Activated T-helper 2 cell treated with anti-CD3 and anti-CD28 coated beads, Interferon-gamma antibody, Interleukin-2, Interleukin-4, amounts not matched to agents 10 μg/mL and 5 μg/mL and 100 μg/mL, durations not matched to agents 14 hours and 24 hours and 36 hours (primary cell): ENCODE measurements at regions of chr1 and their contacts with region 1.

Region 1: DNA sequence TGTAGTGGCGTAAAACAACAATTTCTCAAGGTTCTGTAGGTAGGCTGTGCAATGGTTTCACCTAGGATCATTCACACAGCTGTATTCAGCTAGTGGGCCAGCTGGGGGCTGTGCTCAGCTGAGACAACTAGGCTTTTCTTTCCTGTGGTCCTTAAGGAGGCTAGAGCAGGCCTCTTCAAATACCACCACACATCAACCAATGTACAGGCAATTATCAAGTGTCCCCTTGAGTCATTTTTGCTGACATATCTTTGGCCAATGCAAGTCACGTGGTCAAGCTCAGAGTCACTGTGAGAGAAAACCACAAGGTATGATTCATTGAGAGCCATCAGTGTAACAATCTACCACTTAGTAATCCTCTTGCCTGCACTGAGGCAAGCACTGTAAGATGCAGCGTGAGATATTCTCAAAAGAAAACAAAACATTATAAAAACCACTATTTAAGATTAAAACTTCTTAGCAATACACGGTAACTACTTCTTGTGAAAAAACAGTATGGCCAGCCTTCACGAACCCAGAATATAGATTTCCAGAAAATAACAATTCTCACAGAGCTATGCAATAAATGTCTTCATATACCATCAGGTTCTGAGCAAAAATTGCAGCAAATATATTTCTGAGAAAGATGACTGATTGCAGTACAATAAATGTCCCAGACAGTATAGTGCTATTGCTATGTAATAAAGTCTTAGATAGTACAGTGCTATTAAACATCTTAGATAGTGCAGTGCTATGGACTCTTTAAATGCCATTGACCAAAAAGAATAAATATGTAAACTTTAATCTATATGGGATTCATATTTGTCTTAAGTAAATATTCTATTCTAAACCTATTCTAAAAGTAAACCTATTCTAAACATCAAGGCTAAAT is 55.3 kb downstream of the NME7 start:
- DNase-seq: peak; percentile 69
- H3K4me3 Mint-ChIP-seq: no peak overlapping the region
- H3K27ac Mint-ChIP-seq: peak overlapping the region; percentile 70
- H3K4me1 Mint-ChIP-seq: peaks cover 31% of the 10 kb centered on the region
- H3K27me3 Mint-ChIP-seq: no peaks in the 10 kb centered on the region

Region 2: GRCh38 chr1:169044971-169045370 is 267.3 kb before region 1 on chr1:
- intact Hi-C with region 1: loop called (anchors 1 kb)
- DNase-seq: no peak
- H3K4me3 Mint-ChIP-seq: peak overlapping the region; percentile 5
- H3K27ac Mint-ChIP-seq: peak overlapping the region; percentile 58
- H3K4me1 Mint-ChIP-seq: peaks cover 69% of the 10 kb centered on the region
- H3K27me3 Mint-ChIP-seq: no peaks in the 10 kb centered on the region

Region 3: DNA sequence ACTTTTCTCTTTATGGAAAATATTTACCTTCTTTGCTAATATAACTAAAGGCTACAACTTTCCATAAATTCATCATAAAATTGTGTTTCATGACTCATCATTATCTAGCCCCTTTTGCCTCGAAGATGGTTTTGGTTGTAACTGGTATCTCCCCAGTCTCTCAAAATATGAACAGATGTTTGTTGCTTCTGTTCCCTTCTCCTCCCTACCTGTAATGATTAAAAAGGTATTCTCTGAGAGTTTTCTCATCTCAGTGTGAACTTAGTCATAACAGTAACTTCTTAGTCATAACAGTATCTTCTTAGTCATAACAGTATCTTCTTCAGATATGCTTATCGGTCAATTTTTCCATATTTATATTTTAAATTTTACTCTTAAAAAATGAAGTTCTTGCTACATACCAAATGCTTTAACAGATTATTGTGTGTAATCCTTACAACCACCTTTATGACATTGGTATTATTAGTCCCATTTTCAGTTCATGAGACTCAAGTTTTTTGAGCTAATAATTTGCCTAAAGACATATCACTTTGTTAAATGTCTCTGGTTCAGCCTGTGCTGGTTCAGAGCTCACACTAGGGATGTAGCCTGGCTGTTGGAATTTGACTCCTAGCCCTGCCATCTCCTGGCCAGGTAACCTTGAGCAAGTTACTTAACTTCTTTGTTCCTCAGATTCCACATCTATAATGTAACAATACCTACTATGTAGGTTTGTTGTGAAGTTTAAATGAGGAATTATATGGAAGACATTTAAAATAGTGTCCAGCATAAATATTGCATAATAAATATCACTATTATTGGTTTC is 173.3 kb before region 1 on chr1:
- intact Hi-C with region 1: loop called (anchors 2 kb)
- DNase-seq: no peak
- H3K4me3 Mint-ChIP-seq: no peak overlapping the region
- H3K27ac Mint-ChIP-seq: peak overlapping the region; percentile 56
- H3K4me1 Mint-ChIP-seq: peaks cover 12% of the 10 kb centered on the region
- H3K27me3 Mint-ChIP-seq: no peaks in the 10 kb centered on the region

Region 4: DNA sequence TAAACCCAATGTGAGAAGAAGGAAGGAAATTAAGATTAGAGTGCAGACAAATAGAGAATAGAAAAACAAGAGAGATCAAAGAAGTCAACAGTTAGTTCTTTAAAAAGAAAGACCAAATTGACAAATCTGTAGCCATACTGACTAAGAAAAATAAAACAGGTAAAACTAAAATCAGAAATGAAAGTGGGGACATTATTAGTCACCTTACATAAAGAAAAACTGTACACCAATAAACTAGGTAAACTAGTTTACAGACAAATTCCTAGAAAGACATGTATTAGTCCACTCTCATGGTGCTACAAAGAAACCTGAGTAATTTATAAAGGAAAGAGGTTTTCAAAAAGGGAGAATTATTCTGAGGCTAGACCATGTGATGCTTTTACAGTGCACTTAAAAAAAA is 78.0 kb after region 1 on chr1:
- intact Hi-C with region 1: loop called (anchors 1 kb)
- DNase-seq: no peak
- H3K4me3 Mint-ChIP-seq: no peak overlapping the region
- H3K27ac Mint-ChIP-seq: peak overlapping the region; percentile 29
- H3K4me1 Mint-ChIP-seq: peaks cover 19% of the 10 kb centered on the region
- H3K27me3 Mint-ChIP-seq: no peaks in the 10 kb centered on the region